ENCODE measurements at regions of chr1 and their contacts with region 1.

Region 1: GRCh38 chr1:9874959-9875635 is 35.0 kb downstream of the CTNNBIP1 start:
- DNase-seq: peak; percentile 88 to 98 (median 97)
- ATAC-seq: peak; percentile 96
- H3K4me3 ChIP-seq: no peak overlapping the region
- H3K27ac ChIP-seq: no peak overlapping the region
- H3K4me1 ChIP-seq: peaks cover 5 to 25% of the 10 kb centered on the region in 2 experiments; a peak in 4 of 5 replicates
- H3K27me3 ChIP-seq: no peaks in the 10 kb centered on the region
- CTCF ChIP-seq: peak; percentile 95 to 99 (median 98)
- EP300 ChIP-seq: no peak
- POLR2A ChIP-seq: no peak
- RAD21 ChIP-seq: peak; percentile 94 to 98

Region 2: DNA sequence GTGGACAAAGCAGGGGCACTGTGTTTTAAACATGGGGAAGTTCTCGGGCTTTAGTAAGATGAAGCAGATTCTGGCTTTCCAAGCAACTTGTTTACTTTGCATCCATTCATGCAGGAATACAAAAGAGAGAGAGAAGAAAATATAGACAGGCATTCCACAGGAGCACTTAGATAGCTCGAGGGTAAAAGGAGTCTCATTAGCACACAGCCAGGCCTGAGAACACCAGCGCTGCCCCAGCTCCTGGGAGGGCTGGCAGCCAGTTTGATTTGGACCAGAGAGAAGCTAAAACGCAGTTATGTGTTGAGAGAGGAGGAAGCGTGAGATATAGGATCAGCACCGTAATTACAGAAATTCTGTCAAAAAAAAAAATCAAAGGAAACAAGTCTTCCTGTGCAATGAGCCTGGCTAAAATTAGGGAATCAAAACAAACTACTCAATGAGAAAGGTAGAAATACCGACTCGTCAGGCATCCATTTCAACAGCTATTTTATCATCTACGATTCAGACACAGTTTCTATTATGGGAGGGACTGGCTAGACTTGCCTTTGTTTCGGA is 119.6 kb before region 1 on chr1:
- CTCF ChIA-PET with region 1: no interaction called
- POLR2A ChIA-PET with region 1: no interaction called
- in situ Hi-C with region 1: no loop called
- intact Hi-C with region 1: no loop called
- DNase-seq: no peak
- ATAC-seq: no peak
- H3K4me3 ChIP-seq: no peak overlapping the region
- H3K27ac ChIP-seq: no peak overlapping the region
- H3K4me1 ChIP-seq: peaks cover 13 to 17% of the 10 kb centered on the region in 2 experiments; a peak in 4 of 5 replicates
- H3K27me3 ChIP-seq: no peaks in the 10 kb centered on the region
- CTCF ChIP-seq: no peak
- EP300 ChIP-seq: no peak
- POLR2A ChIP-seq: no peak
- RAD21 ChIP-seq: no peak

Region 3: DNA sequence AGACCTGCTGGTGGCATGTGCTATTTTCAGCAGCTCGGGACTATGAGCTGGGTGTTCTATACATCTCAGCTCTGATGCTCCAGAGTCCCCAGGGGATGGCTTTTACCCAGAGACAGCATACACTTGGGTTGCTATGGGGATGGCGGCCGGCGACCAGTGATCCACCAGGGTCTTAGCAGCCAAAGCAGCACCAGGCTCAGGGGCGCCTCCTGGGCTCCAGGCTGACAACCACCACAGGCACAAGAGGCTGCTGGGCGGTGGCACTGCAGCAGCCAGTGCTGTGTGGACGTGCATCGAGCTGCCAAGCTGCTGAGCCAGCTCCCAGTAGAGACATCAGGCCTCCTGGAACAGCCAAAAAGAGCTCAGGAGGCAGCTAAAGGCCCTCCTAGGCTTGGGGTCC is 13.7 kb before region 1 on chr1:
- CTCF ChIA-PET with region 1: interaction called, 3 read pairs
- POLR2A ChIA-PET with region 1: interaction called, 17 read pairs
- in situ Hi-C with region 1: no loop called
- intact Hi-C with region 1: no loop called
- DNase-seq: no peak
- ATAC-seq: no peak
- H3K4me3 ChIP-seq: no peak overlapping the region
- H3K27ac ChIP-seq: no peak overlapping the region
- H3K4me1 ChIP-seq: peaks cover 0 to 6% of the 10 kb centered on the region in 2 experiments; a peak in 1 of 5 replicates
- H3K27me3 ChIP-seq: no peaks in the 10 kb centered on the region
- CTCF ChIP-seq: peak in 2 of 3 experiments; percentile 4 to 18; a peak in 1 of 6 replicates
- EP300 ChIP-seq: no peak
- POLR2A ChIP-seq: no peak
- RAD21 ChIP-seq: 0 out of 4 replicates have a peak, but pooled peaks of 1 of the 2 experiments have one; percentile 23

Region 4: DNA sequence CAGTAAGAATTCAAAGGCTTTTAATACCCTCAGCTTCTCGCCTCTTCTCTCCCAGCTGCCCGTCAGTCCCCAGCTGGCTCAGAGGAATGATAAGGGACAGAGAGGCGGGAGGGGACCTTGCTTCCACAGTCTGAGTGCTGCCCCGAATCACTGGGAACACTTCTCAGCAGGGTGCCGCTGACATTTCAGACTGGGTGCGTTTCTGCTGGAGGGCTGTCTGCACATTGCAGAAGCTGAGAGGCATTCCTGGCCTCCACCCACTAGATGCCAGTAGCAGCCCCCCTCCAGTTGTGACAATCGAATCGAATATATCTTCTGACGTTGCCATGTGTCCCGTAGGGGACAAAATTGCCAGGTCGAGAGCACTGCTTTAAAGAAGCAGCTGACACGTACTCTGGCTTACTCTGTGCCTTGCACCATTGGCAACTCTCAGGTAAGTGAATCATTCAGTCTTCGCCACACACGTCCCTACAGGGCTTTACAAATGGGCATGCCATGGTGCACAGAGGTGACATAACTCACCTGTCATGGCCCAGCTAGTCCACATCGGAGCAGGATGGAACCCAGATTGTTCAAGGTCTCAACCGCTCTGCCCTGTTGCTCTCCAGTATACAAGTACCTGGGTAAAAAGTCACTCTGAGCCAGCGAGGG is 11.1 kb after region 1 on chr1:
- CTCF ChIA-PET with region 1: no interaction called
- POLR2A ChIA-PET with region 1: interaction called, 11 read pairs
- in situ Hi-C with region 1: no loop called
- intact Hi-C with region 1: no loop called
- DNase-seq: peak; percentile 36 to 53 (median 44)
- ATAC-seq: peak; percentile 61
- H3K4me3 ChIP-seq: no peak overlapping the region
- H3K27ac ChIP-seq: no peak overlapping the region
- H3K4me1 ChIP-seq: peaks cover 0 to 32% of the 10 kb centered on the region in 2 experiments; a peak in 4 of 5 replicates
- H3K27me3 ChIP-seq: no peaks in the 10 kb centered on the region
- CTCF ChIP-seq: peak in 2 of 3 experiments; percentile 12 to 28; a peak in 2 of 6 replicates
- EP300 ChIP-seq: no peak
- POLR2A ChIP-seq: no peak
- RAD21 ChIP-seq: 0 out of 4 replicates have a peak, but pooled peaks of 1 of the 2 experiments have one; percentile 4

Region 5: DNA sequence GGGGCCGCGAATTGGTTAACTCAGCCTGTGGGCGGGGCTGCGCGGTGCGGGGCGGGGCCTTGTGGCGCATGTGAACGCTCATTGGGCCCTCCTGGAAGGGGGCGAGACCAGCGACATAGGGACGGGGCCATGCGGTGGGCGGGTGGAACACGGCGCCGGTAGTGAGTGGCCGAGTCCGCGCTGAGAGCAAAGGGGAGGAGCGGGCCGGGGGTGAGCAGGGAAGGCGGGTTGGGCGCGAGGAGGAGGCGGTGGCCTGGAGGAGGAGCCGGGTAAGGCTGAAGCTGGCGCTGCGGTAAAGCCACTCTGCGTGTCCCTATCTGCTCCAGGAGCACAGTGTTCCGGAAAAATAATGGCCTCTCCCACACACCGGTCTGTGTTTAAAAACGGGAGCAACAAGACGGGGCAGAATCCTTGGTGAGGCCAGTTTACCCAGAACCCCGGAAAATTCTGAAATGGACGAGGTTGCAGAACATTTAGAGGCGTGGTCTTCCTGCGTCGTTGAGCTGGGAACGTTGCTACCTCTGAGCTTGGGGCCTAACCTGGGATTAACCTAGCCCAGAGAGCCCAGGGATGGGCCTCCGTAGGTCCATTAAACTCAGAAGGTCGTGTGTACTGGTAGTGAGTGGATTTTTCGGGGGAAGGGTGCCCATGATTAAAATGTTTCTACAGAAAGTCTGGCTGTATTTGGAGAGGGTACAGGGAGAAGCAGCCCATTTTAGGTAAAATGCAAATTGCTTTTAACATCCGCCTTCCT is 35.5 kb after region 1 on chr1:
- CTCF ChIA-PET with region 1: interaction called, 7 read pairs
- POLR2A ChIA-PET with region 1: interaction called, 5 read pairs
- in situ Hi-C with region 1: no loop called
- intact Hi-C with region 1: loop called (anchors 1 kb)
- DNase-seq: peak; percentile 98 to 100 (median 99)
- ATAC-seq: peak; percentile 97
- H3K4me3 ChIP-seq: peak overlapping the region; percentile 48
- H3K27ac ChIP-seq: peak overlapping the region; percentile 93
- H3K4me1 ChIP-seq: peaks cover 25 to 33% of the 10 kb centered on the region in 2 experiments
- H3K27me3 ChIP-seq: no peaks in the 10 kb centered on the region
- CTCF ChIP-seq: no peak
- EP300 ChIP-seq: no peak; the same call in 1 of the 2 replicates
- POLR2A ChIP-seq: peak; percentile 94
- RAD21 ChIP-seq: no peak

Region 6: DNA sequence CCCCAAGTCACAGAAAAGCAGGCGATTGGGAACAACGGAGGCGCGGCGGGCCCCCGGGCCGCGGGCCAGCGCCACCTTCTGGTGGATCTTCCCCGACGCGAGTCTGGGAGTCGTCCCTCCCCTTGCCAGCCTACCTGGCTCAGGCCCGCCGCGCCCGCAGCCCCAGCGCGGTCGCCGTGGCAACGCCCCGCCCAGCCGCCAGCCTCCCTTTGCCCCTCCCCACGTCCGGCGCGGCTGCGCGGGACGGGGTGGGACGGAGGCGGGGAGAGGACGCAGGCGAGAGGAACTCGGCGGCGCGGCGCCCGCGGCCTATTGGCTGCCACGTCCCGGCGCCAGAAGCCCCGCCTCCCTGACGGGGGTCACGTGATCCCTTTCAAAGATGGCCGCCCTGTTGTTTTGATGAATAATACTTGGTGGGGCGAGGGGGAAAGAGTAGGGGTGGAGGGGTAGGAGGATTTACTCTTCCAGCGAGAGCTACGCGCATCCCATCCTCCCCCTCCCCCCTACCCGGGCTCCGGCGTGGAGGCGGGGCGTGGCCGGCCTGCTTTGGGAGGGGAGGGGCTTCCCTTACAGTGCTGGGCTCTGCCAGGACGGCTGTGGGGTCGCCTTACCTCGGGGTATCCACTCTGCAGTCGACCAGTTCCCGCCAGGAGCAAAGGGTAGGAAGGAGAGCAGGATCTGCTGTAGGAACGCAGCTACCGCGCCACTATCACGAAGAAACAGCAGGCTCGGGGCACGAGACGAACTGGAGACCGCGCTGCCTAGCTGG is 157.7 kb after region 1 on chr1 and contains the start of gene UBE4B:
- CTCF ChIA-PET with region 1: interaction called, 5 read pairs
- POLR2A ChIA-PET with region 1: no interaction called
- in situ Hi-C with region 1: no loop called
- intact Hi-C with region 1: loop called (anchors 1 kb)
- DNase-seq: peak; percentile 98 to 99 (median 99)
- ATAC-seq: peak; percentile 93
- H3K4me3 ChIP-seq: peak within 1 kb of the TSS; percentile 62
- H3K27ac ChIP-seq: peak within 1 kb of the TSS; percentile 97
- H3K4me1 ChIP-seq: peaks cover 3 to 14% of the 10 kb centered on the region in 2 experiments; a peak in 2 of 5 replicates
- H3K27me3 ChIP-seq: no peaks in the 10 kb centered on the region
- CTCF ChIP-seq: peak; percentile 91 to 98 (median 95)
- EP300 ChIP-seq: peak; percentile 53; the same call in 1 of the 2 replicates
- POLR2A ChIP-seq: peak; percentile 89
- RAD21 ChIP-seq: peak; percentile 81 to 84
- polyA plus RNA-seq, gene UBE4B: 11.7 to 24.9 TPM

Region 7: DNA sequence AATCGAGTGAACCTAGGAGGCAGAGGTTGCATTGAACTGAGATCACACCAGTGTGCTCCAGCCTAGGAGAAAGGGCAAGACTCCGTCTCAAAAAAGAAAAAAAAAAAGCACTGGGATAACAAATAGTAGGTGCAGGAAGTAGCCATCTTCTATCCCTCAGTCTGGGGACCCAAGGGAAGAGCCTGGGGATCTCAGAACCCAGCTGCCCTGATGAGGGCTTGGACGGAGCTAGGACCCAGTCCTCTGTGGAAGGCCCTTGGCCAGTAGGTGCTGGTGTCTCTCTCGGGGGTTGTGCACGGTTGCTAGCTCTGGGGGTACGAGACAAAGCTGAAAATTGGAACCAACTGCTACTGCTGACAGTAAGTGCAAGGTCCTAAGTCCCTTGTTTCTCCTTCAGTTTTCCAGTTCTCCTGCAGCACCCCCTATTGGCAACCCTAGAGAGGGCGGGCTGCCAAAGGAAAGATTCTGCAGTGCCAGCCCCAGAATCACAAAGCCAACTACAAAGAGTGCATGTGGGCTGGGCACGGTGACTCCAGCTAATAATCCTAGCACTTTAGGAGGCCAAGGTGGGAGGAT is 277.7 kb after region 1 on chr1:
- CTCF ChIA-PET with region 1: interaction called, 31 read pairs
- POLR2A ChIA-PET with region 1: no interaction called
- in situ Hi-C with region 1: no loop called
- intact Hi-C with region 1: loop called (anchors 1 kb)
- DNase-seq: peak; percentile 37 to 66 (median 54)
- ATAC-seq: peak; percentile 90
- H3K4me3 ChIP-seq: no peak overlapping the region
- H3K27ac ChIP-seq: no peak overlapping the region
- H3K4me1 ChIP-seq: no peaks in the 10 kb centered on the region
- H3K27me3 ChIP-seq: no peaks in the 10 kb centered on the region
- CTCF ChIP-seq: peak; percentile 72 to 86 (median 81)
- EP300 ChIP-seq: no peak
- POLR2A ChIP-seq: no peak
- RAD21 ChIP-seq: peak; percentile 54 to 74

Measured in K562 (cell line).